Psoas muscle (tissue), 8 donors: ENCODE measurements at regions of chr12 and their contacts with region 1.

Region 1: GRCh38 chr12:48795480-48796455 is 6.9 kb upstream of the ADCY6 start:
- DNase-seq: peak in 1 of 2 donors; percentile 59
- ATAC-seq: peak; percentile 94 to 97 (median 95)
- H3K4me3 ChIP-seq: no peak overlapping the region
- H3K27ac ChIP-seq: no peak overlapping the region
- H3K4me1 ChIP-seq: no peaks in the 10 kb centered on the region
- H3K27me3 ChIP-seq: no peaks in the 10 kb centered on the region
- CTCF ChIP-seq: peak; percentile 96

Region 2: DNA sequence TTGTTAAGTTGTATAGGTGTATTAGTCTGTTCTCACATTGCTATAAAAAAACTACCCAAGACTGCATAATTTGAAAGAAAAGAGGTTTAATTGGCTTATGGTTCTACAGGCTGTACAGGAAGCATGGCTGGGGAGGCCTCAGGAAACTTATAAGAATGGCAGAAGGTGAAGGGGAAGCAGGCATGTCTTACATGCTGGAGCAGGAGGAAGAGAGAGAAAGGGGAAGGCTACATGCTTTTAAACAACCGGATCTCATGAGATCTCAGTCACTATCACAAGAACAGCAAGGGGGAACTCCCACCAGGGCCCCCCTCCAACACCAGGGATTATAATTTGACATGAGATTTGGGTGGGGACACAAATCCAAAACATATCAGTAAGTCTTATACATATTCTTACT is 532.2 kb before region 1 on chr12:
- intact Hi-C with region 1: no loop called
- DNase-seq: no peak
- ATAC-seq: no peak
- H3K4me3 ChIP-seq: no peak overlapping the region
- H3K27ac ChIP-seq: no peak overlapping the region
- H3K4me1 ChIP-seq: no peaks in the 10 kb centered on the region
- H3K27me3 ChIP-seq: no peaks in the 10 kb centered on the region
- CTCF ChIP-seq: no peak

Region 3: GRCh38 chr12:48379780-48380179 is 416.0 kb before region 1 on chr12:
- intact Hi-C with region 1: no loop called
- DNase-seq: no peak
- ATAC-seq: no peak
- H3K4me3 ChIP-seq: no peak overlapping the region
- H3K27ac ChIP-seq: no peak overlapping the region
- H3K4me1 ChIP-seq: no peaks in the 10 kb centered on the region
- H3K27me3 ChIP-seq: no peaks in the 10 kb centered on the region
- CTCF ChIP-seq: no peak

Region 4: GRCh38 chr12:48542300-48542928 is 253.4 kb before region 1 on chr12:
- intact Hi-C with region 1: loop called in 1 of 2 experiments (anchors 5 kb)
- DNase-seq: no peak
- ATAC-seq: no peak
- H3K4me3 ChIP-seq: no peak overlapping the region
- H3K27ac ChIP-seq: no peak overlapping the region
- H3K4me1 ChIP-seq: no peaks in the 10 kb centered on the region
- H3K27me3 ChIP-seq: peaks cover 0 to 6% (median 2%) of the 10 kb centered on the region in 3 donors
- CTCF ChIP-seq: peak; percentile 43

Region 5: GRCh38 chr12:48618541-48618940 is 177.2 kb before region 1 on chr12:
- intact Hi-C with region 1: no loop called
- DNase-seq: peak; percentile 33 to 63
- ATAC-seq: peak; percentile 76 to 90 (median 81)
- H3K4me3 ChIP-seq: no peak overlapping the region
- H3K27ac ChIP-seq: no peak overlapping the region
- H3K4me1 ChIP-seq: no peaks in the 10 kb centered on the region
- H3K27me3 ChIP-seq: peaks cover 0 to 12% (median 0%) of the 10 kb centered on the region in 3 donors
- CTCF ChIP-seq: peak; percentile 98

Region 6: DNA sequence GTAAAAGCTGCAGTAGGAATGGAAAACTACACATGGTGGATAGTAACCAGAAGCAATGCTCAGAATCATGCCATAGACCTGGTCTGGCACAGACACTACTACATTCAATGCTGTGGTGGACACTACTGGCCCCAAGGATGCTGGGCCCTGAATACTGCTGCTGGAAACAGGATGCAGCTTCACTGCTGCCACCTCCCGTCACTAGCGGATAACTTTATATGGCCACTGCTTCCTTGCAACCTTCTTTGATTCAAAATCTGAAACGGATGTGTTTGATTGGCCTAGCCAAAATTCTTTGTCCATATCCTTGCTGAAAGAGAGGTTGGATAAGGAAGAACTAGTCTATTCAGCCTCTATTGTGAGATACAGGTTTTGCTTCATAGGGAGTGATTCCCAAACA is 37.5 kb before region 1 on chr12:
- intact Hi-C with region 1: loop called (anchors 1 to 2 kb)
- DNase-seq: no peak
- ATAC-seq: no peak
- H3K4me3 ChIP-seq: no peak overlapping the region
- H3K27ac ChIP-seq: no peak overlapping the region
- H3K4me1 ChIP-seq: no peaks in the 10 kb centered on the region
- H3K27me3 ChIP-seq: no peaks in the 10 kb centered on the region
- CTCF ChIP-seq: no peak